Activated CD4-positive, alpha-beta T cell treated with anti-CD3 and anti-CD28 coated beads, Interleukin-2, amount 10 ng/mL, durations not matched to agents 24 days and 14 days (primary cell): ENCODE measurements at regions of chr4 and their contacts with region 1.

Region 1: GRCh38 chr4:145936142-145936996 is 2.3 kb downstream of the ZNF827 start:
- DNase-seq: peak; percentile 89
- H3K4me3 Mint-ChIP-seq: peak overlapping the region; percentile 94
- H3K27ac Mint-ChIP-seq: peak overlapping the region; percentile 97
- H3K4me1 Mint-ChIP-seq: peaks cover 40% of the 10 kb centered on the region
- H3K27me3 Mint-ChIP-seq: no peaks in the 10 kb centered on the region

Region 2: DNA sequence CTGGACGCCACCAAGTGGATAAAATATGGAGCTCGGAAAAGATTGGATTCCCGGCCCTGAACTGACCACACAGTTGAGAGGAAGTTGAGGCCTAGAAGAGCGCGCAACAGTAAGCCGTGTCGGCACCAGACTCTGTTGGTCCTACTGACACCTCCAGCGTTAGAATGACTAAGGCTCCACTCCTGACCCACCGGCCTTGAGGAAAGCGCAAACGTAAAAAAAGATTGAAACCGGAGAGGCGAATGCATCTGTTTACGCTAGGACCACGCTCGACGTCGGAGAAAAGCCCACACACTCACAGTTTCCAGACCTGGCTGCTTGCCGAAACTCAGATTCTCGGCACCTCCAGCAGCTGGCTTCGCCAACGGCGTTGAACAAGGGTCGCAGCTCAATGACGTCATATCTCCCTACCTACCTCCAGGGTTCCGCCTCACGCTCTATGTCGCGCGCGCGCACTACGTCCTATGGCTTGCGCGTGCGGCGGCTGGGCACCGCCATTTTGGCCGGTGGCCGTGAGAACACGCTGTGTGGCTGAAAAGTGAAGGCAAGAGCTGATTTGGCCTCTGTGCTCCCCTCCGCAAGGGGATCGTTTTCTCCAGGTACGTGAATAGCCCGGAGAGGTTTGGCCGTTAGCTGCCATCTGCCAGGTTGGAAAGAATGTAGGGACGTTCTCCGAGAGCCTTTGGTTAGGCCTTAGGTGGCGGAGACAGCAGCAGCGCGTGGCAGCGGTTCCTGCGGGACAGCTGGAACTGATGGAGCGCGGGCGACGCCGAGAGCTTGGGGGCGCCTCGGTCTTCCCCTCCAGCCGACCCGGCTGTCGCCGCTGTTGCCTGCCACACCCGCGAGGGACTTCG is 838.3 kb before region 1 on chr4 and contains the starts of genes ABCE1 and ANAPC10:
- intact Hi-C with region 1: loop called (anchors 5 kb)
- DNase-seq: peak; percentile 99
- H3K4me3 Mint-ChIP-seq: peak within 1 kb of the TSS; percentile 96
- H3K27ac Mint-ChIP-seq: peak within 1 kb of the TSS; percentile 99
- H3K4me1 Mint-ChIP-seq: peaks cover 24% of the 10 kb centered on the region
- H3K27me3 Mint-ChIP-seq: no peaks in the 10 kb centered on the region
- total RNA-seq, gene ABCE1: 191 and 194 TPM in 2 replicates
- total RNA-seq, gene ANAPC10: 26.7 and 30.4 TPM in 2 replicates

Region 3: GRCh38 chr4:145618932-145619638 is 317.3 kb before region 1 on chr4 and contains the start of gene MMAA:
- intact Hi-C with region 1: loop called (anchors 1 kb)
- DNase-seq: peak; percentile 99
- H3K4me3 Mint-ChIP-seq: peak within 1 kb of the TSS; percentile 98
- H3K27ac Mint-ChIP-seq: peak within 1 kb of the TSS; percentile 99
- H3K4me1 Mint-ChIP-seq: peaks cover 39% of the 10 kb centered on the region
- H3K27me3 Mint-ChIP-seq: peaks cover 2% of the 10 kb centered on the region
- total RNA-seq, gene MMAA: 18.9 and 19.5 TPM in 2 replicates

Region 4: DNA sequence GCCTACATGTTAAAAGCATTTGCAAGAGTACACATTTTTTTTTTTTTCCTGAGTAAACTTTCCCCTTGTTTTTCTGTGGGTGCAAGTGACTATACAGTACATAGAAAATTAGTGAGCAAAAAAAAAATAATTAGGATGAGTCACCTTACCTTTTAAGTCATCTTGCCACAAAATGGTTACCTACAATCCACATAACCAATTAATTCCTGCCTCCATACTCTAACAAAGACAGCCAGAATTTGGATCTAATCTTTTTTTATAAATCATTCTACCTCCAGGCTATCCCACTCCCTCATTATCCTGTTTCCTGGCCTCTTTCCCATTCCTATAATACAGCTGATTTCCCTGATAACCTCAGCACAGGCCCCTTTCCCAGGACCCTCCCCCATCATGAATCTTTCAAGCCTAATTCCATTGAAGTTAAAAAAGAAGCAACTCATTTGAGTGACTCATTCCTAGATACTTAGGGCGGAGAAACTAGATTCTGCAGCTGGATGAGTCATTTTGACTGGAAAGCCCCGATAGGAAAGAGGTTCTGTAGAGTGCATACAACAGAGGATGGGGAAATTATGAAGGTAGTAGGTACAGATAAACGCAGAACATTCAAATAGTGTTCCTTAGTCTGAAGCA is 128.2 kb before region 1 on chr4:
- intact Hi-C with region 1: loop called (anchors 1 kb)
- DNase-seq: peak; percentile 83
- H3K4me3 Mint-ChIP-seq: peak overlapping the region; percentile 60
- H3K27ac Mint-ChIP-seq: peak overlapping the region; percentile 95
- H3K4me1 Mint-ChIP-seq: peaks cover 44% of the 10 kb centered on the region
- H3K27me3 Mint-ChIP-seq: no peaks in the 10 kb centered on the region

Region 5: DNA sequence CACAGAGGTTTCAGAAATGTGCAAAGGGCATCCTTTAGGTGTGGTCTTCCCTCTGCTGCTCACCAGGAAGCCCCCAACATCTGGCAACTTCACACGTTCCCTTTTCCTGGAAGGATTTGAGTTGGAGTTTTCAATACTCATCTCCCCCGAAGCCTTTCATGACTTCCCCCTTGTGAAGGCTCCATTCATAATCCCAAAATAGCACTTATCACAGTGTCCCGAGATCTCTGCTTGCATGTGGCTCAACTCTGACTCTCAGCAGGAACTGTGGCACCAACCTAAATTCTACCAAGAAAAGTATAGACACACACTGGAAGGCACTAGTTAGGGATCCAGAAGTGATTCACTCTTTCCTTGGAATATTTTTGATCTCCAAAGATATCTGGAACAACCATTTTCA is 42.8 kb after region 1 on chr4:
- intact Hi-C with region 1: no loop called
- DNase-seq: no peak
- H3K4me3 Mint-ChIP-seq: no peak overlapping the region
- H3K27ac Mint-ChIP-seq: no peak overlapping the region
- H3K4me1 Mint-ChIP-seq: no peaks in the 10 kb centered on the region
- H3K27me3 Mint-ChIP-seq: peaks cover 14% of the 10 kb centered on the region

Region 6: DNA sequence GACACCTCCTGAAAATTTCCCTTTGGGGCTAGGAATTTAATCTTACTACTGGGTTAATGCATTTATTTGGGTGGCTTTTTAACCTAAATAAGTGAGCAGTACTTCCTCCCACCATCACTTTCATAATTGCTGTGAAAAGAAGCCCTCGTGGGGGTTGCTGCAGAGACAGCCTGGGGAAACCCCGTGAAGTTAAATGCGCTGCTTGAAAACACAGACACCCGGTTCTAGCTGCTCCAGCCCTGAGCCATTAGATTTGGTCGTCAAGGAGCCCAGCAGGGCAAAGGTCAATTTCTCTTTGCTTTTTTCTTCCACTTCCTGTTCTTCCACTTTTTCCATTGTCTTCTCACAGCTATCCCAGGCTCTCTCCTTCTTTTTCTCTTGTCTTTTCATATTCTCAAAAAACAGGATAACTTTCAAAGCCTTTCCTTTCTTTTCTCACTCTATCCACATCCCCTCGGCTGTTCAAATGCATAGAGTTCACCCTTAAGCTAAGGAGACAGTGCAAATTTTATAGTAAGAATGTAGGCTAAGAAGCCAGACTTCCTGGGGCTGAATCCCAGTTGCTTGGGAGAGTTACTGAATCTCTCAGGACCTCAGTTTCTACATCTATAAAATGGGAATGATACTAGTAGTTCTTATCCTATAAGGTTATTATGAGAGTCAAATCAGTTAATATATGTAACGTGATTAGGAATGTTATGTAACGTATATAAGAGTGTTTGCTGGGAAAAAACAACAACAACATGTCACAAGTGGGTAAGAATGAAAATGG is 93.8 kb after region 1 on chr4:
- intact Hi-C with region 1: loop called (anchors 5 kb)
- DNase-seq: peak; percentile 62
- H3K4me3 Mint-ChIP-seq: no peak overlapping the region
- H3K27ac Mint-ChIP-seq: no peak overlapping the region
- H3K4me1 Mint-ChIP-seq: peaks cover 7% of the 10 kb centered on the region
- H3K27me3 Mint-ChIP-seq: peaks cover 21% of the 10 kb centered on the region

Region 7: DNA sequence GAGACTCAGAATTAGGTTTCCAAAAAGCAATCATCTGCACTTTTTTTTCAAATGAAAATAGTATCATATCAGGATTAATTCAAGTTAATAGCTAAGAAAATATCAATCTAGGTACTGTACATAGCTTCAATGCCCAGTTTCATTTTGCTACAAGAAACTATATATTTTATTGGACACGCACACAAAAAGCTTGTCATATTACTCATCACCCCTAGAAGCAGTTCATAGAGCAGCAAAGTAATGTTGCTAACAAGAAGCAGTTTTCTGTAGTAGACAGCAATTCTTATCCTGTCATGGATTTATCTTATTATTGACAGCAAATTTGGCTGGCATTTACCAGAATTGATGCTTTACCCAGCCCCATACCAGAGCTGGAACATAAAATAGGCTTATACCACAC is 186.9 kb after region 1 on chr4:
- intact Hi-C with region 1: no loop called
- DNase-seq: no peak
- H3K4me3 Mint-ChIP-seq: no peak overlapping the region
- H3K27ac Mint-ChIP-seq: no peak overlapping the region
- H3K4me1 Mint-ChIP-seq: no peaks in the 10 kb centered on the region
- H3K27me3 Mint-ChIP-seq: peaks cover 10% of the 10 kb centered on the region

Region 8: GRCh38 chr4:146243141-146243882 is 306.9 kb after region 1 on chr4:
- intact Hi-C with region 1: loop called (anchors 1 kb)
- DNase-seq: peak; percentile 80
- H3K4me3 Mint-ChIP-seq: peak overlapping the region; percentile 80
- H3K27ac Mint-ChIP-seq: peak overlapping the region; percentile 91
- H3K4me1 Mint-ChIP-seq: peaks cover 31% of the 10 kb centered on the region
- H3K27me3 Mint-ChIP-seq: no peaks in the 10 kb centered on the region